Endothelial cell of umbilical vein (primary cell): ENCODE measurements at regions of chr11 and their contacts with region 1.

Region 1: DNA sequence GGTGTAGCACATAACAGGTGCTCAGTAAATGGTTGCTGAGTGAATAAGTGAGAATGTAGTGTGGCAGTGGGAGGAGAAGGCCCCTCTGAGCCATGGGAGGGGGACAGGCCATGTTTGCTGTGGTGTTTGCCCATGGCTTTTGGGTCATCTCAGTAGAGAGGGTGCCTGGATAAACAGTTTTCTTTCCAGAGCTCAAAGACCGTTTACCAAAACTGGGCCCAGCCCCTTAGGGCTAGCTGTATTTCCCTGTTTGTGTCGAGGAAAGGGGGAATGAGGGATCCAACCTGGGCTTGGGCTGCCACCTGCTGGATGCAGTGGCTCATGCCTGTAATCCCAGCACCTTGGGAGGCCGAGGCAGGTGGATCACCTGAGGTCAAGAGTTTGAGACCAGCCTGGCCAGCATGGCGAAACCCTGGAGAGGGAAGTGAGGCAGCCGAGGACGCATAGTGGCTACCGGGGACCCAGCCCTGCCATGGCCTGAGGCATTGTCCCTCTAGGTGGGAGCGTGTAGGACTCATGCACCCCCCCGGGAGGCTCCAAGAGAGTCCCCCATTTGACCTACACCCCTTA is 8.7 kb upstream of the LTO1 start:
- DNase-seq: no peak
- H3K4me3 ChIP-seq: no peak overlapping the region
- H3K27ac ChIP-seq: no peak overlapping the region
- H3K4me1 ChIP-seq: no peaks in the 10 kb centered on the region
- H3K27me3 ChIP-seq: peaks cover 0 to 2% of the 10 kb centered on the region in 2 experiments
- CTCF ChIP-seq: peak; percentile 29 to 46
- POLR2A ChIP-seq: no peak

Region 2: DNA sequence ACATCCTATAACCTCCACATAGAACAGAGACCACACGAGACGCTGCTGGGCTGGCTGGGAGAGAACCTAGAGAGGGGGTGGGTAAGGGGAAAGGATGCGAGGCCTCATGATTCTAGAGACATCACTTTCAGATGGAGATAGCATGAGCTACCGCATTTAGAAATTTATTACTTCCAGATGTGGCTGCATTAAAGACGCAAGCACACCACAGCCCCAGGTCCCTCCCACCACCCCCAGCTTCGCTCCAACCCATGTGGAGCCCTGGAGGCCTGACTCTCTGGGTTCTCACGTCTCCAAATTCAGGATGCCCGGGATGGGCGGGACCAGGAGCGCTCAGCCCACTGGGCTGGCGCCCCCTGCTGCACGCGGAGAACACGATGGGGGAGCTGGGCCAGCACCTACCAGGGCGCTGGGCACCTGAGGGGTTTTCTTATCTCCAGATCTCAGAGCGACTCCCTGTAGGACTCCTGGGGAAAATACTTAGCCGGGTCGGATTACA is 793.9 kb before region 1 on chr11:
- CTCF ChIA-PET with region 1: no interaction called
- POLR2A ChIA-PET with region 1: no interaction called
- dilution Hi-C with region 1: no loop called
- intact Hi-C with region 1: no loop called
- DNase-seq: no peak
- H3K4me3 ChIP-seq: no peak overlapping the region
- H3K27ac ChIP-seq: no peak overlapping the region
- H3K4me1 ChIP-seq: peaks cover 15% of the 10 kb centered on the region
- H3K27me3 ChIP-seq: no peaks in the 10 kb centered on the region
- CTCF ChIP-seq: peak; percentile 26 to 43
- POLR2A ChIP-seq: peak; percentile 19

Region 3: DNA sequence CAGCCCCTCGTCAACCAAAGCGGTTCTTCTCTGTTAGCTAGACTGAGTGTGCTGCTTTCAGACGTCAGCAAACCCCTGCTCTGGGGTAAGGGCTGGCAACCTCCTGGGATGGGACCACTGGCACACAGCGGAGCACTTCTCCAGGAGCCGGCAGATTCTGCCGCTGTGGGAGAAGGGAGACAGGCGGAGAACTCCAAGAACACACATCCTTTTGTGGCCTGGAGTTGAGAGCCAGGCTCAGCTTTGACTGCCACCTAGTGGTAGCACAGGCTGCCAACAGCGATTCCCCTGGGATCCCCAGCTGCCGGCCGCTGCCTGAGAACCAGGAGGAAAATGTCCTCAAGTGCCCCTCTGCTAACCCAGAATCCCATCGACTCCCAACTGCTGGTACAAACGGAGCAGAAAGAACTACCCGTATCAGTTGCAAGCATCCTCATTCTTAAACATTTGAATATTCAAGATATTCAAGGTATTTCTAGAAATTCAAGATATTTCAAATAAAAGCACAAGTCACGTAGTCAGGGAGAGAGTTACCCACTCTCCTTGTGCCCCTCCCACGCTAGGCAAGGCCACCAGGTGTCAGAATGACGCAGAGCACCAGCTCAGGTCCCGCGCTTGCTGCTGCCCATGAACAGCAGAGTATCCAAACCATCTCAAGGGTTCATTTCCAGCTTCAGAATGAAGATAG is 13.5 kb before region 1 on chr11:
- CTCF ChIA-PET with region 1: interaction called, 11 read pairs
- POLR2A ChIA-PET with region 1: no interaction called
- dilution Hi-C with region 1: no loop called
- intact Hi-C with region 1: no loop called
- DNase-seq: peak; percentile 83
- H3K4me3 ChIP-seq: no peak overlapping the region
- H3K27ac ChIP-seq: no peak overlapping the region
- H3K4me1 ChIP-seq: peaks cover 9% of the 10 kb centered on the region
- H3K27me3 ChIP-seq: no peaks in the 10 kb centered on the region
- CTCF ChIP-seq: peak; percentile 94 to 97
- POLR2A ChIP-seq: peak; percentile 45

Region 4: GRCh38 chr11:69841859-69842698 is 158.2 kb after region 1 on chr11:
- CTCF ChIA-PET with region 1: interaction called, 5 read pairs
- POLR2A ChIA-PET with region 1: no interaction called
- dilution Hi-C with region 1: no loop called
- intact Hi-C with region 1: loop called (anchors 1 kb)
- DNase-seq: no peak
- H3K4me3 ChIP-seq: no peak overlapping the region
- H3K27ac ChIP-seq: no peak overlapping the region
- H3K4me1 ChIP-seq: no peaks in the 10 kb centered on the region
- H3K27me3 ChIP-seq: no peaks in the 10 kb centered on the region
- CTCF ChIP-seq: peak; percentile 39 to 56
- POLR2A ChIP-seq: no peak

Region 5: GRCh38 chr11:69909561-69910496 is 226.0 kb after region 1 on chr11:
- CTCF ChIA-PET with region 1: interaction called, 5 read pairs
- POLR2A ChIA-PET with region 1: no interaction called
- dilution Hi-C with region 1: no loop called
- intact Hi-C with region 1: loop called (anchors 1 kb)
- DNase-seq: no peak
- H3K4me3 ChIP-seq: no peak overlapping the region
- H3K27ac ChIP-seq: no peak overlapping the region
- H3K4me1 ChIP-seq: no peaks in the 10 kb centered on the region
- H3K27me3 ChIP-seq: no peaks in the 10 kb centered on the region
- CTCF ChIP-seq: peak; percentile 61 to 71
- POLR2A ChIP-seq: no peak